Activated B cell treated with CpG ODN at 0.5 μM for 24 hours (primary cell): ENCODE measurements at regions of chr7 and their contacts with region 1.

Region 1: GRCh38 chr7:144796919-144797318 is 38.9 kb downstream of the TPK1 start:
- DNase-seq: no peak
- ATAC-seq: no peak
- H3K4me3 Mint-ChIP-seq: no peak overlapping the region
- H3K27ac Mint-ChIP-seq: no peak overlapping the region
- H3K4me1 Mint-ChIP-seq: peaks cover 40% of the 10 kb centered on the region
- H3K27me3 Mint-ChIP-seq: no peaks in the 10 kb centered on the region
- CTCF ChIP-seq: no peak

Region 2: GRCh38 chr7:144786522-144786921 is 10.4 kb before region 1 on chr7:
- CTCF ChIA-PET with region 1: no interaction called
- POLR2A ChIA-PET with region 1: no interaction called
- intact Hi-C with region 1: loop called (anchors 2 kb)
- DNase-seq: no peak
- ATAC-seq: peak; percentile 34
- H3K4me3 Mint-ChIP-seq: no peak overlapping the region
- H3K27ac Mint-ChIP-seq: no peak overlapping the region
- H3K4me1 Mint-ChIP-seq: peaks cover 4% of the 10 kb centered on the region
- H3K27me3 Mint-ChIP-seq: no peaks in the 10 kb centered on the region
- CTCF ChIP-seq: no peak

Region 3: DNA sequence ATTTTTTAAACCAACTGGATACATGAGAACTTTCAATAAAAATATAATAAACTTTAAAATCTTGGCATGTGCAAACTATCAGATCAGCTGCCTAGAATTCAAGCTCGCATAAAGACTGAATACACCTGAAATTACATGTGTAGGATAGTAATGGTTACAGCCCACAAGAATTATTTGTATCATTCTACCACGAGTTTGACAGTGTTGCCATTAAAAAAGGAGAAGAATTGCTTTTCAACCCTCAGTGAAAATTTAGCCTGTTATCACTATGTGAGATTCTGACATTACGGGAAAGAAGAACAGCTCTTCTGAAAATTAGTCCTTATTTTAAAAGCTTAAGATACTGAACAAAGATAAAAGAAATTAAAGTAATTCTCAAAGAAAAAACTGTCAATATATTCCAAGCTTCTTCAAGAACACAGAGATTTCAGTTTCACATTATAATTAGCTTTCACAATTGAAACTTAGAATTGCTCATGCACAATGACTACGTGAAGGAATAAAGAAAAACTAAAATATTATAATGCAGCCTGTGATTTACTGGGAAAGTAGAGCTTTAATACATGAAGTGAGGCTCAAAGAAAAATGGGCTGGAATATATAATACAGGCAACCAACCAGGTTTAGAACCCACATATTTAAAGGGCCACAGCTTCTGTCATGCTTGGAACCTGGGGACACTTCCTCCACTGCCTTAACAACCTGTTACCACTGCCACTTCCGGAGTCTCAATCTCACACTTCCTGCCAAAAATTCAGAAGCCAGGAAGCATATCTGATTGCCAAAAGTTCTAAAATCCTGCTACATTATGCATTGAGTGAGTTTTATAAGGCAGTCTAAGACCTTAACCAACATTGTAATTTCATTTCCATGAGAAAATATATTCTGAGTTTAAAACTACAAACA is 15.7 kb after region 1 on chr7:
- CTCF ChIA-PET with region 1: interaction called, 5 read pairs
- POLR2A ChIA-PET with region 1: interaction called, 15 read pairs
- intact Hi-C with region 1: loop called (anchors 2 kb)
- DNase-seq: no peak
- ATAC-seq: peak; percentile 92
- H3K4me3 Mint-ChIP-seq: peak overlapping the region; percentile 68
- H3K27ac Mint-ChIP-seq: peak overlapping the region; percentile 93
- H3K4me1 Mint-ChIP-seq: peaks cover 44% of the 10 kb centered on the region
- H3K27me3 Mint-ChIP-seq: no peaks in the 10 kb centered on the region
- CTCF ChIP-seq: no peak

Region 4: DNA sequence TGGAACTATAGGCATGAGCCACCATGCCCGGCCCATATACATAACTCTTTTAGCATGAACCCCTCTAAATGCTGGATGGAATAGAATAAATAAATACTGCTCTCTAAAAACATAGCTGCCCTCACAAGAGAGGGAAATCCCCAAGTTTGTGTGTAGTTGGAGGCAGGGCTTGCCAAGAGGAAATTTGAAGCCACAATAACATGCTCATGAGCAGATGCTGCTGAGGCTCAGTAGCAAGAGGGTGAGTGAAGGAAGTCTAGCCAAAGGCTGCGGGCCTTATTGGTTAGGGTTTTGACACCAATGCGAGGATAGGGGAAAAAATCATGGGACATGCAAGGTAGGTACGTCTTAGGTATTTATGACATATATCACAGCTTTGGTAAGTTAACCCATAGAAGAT is 21.6 kb after region 1 on chr7:
- CTCF ChIA-PET with region 1: interaction called, 5 read pairs
- POLR2A ChIA-PET with region 1: interaction called, 3 read pairs
- intact Hi-C with region 1: loop called (anchors 2 kb)
- DNase-seq: no peak
- ATAC-seq: peak; percentile 94
- H3K4me3 Mint-ChIP-seq: peak overlapping the region; percentile 55
- H3K27ac Mint-ChIP-seq: peak overlapping the region; percentile 84
- H3K4me1 Mint-ChIP-seq: peaks cover 70% of the 10 kb centered on the region
- H3K27me3 Mint-ChIP-seq: no peaks in the 10 kb centered on the region
- CTCF ChIP-seq: no peak

Region 5: GRCh38 chr7:144842377-144842851 is 45.5 kb after region 1 on chr7:
- CTCF ChIA-PET with region 1: no interaction called
- POLR2A ChIA-PET with region 1: no interaction called
- intact Hi-C with region 1: loop called (anchors 2 kb)
- DNase-seq: no peak
- ATAC-seq: peak; percentile 93
- H3K4me3 Mint-ChIP-seq: peak overlapping the region; percentile 64
- H3K27ac Mint-ChIP-seq: peak overlapping the region; percentile 87
- H3K4me1 Mint-ChIP-seq: peaks cover 13% of the 10 kb centered on the region
- H3K27me3 Mint-ChIP-seq: no peaks in the 10 kb centered on the region
- CTCF ChIP-seq: no peak

Region 6: DNA sequence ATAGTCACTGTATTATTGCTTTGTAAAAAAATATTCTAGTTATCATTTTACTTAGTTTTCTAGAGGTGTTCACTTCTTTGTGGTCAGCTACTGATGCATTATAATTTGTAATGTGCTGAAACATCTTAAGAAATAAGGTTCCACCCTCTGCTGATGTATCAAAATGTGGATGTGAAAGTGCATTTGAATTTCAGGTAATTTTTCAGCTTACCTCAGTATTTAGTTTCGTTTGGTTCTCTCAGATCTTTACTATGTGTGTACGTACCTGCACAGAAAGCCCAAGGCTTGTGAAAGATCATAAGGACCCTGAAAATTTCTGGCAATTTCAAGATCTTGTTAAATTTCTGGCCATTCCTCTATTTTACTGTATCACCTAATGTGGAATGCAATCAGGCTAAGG is 581.3 kb after region 1 on chr7:
- CTCF ChIA-PET with region 1: no interaction called
- POLR2A ChIA-PET with region 1: no interaction called
- intact Hi-C with region 1: no loop called
- DNase-seq: no peak
- ATAC-seq: no peak
- H3K4me3 Mint-ChIP-seq: no peak overlapping the region
- H3K27ac Mint-ChIP-seq: no peak overlapping the region
- H3K4me1 Mint-ChIP-seq: no peaks in the 10 kb centered on the region
- H3K27me3 Mint-ChIP-seq: no peaks in the 10 kb centered on the region
- CTCF ChIP-seq: no peak